HEK293 (cell line): ENCODE measurements at regions of chr5 and their contacts with region 1.

Region 1: GRCh38 chr5:56838409-56839039 is 23.2 kb downstream of the MAP3K1 start:
- H3K4me3 ChIP-seq: no peak overlapping the region
- H3K27ac ChIP-seq: no peak overlapping the region
- H3K4me1 ChIP-seq: peaks cover 11% of the 10 kb centered on the region
- CTCF ChIP-seq: peak; percentile 57

Region 2: GRCh38 chr5:56264417-56265025 is 574.0 kb before region 1 on chr5:
- CTCF ChIA-PET with region 1: interaction called, 74 read pairs
- POLR2A ChIA-PET with region 1: interaction called, 9 read pairs
- H3K4me3 ChIP-seq: no peak overlapping the region
- H3K27ac ChIP-seq: no peak overlapping the region
- H3K4me1 ChIP-seq: no peaks in the 10 kb centered on the region
- CTCF ChIP-seq: peak; percentile 69

Region 3: GRCh38 chr5:56328753-56329560 is 509.6 kb before region 1 on chr5:
- CTCF ChIA-PET with region 1: interaction called, 11 read pairs
- POLR2A ChIA-PET with region 1: no interaction called
- H3K4me3 ChIP-seq: no peak overlapping the region
- H3K27ac ChIP-seq: no peak overlapping the region
- H3K4me1 ChIP-seq: no peaks in the 10 kb centered on the region
- CTCF ChIP-seq: no peak

Region 4: GRCh38 chr5:56858777-56859442 is 20.4 kb after region 1 on chr5:
- CTCF ChIA-PET with region 1: interaction called, 13 read pairs
- POLR2A ChIA-PET with region 1: no interaction called
- H3K4me3 ChIP-seq: no peak overlapping the region
- H3K27ac ChIP-seq: no peak overlapping the region
- H3K4me1 ChIP-seq: no peaks in the 10 kb centered on the region
- CTCF ChIP-seq: no peak

Region 5: DNA sequence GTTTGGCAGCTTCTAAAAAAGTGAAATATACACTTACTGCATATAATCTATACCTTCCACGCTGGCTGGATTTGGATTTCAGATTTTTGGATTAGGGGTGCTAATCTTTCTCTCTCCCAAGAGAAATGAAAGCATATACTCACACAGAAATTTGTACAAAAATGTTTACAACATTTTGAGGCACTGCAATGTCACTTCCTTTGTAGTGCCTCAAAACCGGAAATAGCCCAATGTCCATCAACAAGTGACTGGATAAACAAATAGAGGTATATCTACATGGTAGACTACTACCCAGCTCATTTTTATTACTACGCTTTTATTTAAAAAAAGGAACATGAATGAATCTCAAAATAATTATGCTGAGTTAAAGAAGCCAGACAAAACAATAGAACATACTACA is 187.4 kb after region 1 on chr5:
- CTCF ChIA-PET with region 1: no interaction called
- POLR2A ChIA-PET with region 1: no interaction called
- H3K4me3 ChIP-seq: no peak overlapping the region
- H3K27ac ChIP-seq: no peak overlapping the region
- H3K4me1 ChIP-seq: no peaks in the 10 kb centered on the region
- CTCF ChIP-seq: no peak